Activated naive CD8-positive, alpha-beta T cell treated with anti-CD3 and anti-CD28 coated beads, Interleukin-2, amount 10 ng/mL, durations not matched to agents 7 days and 5 days (primary cell): ENCODE measurements at regions of chr7 and their contacts with region 1.

Region 1: GRCh38 chr7:150514748-150515222 is at the start of gene GIMAP7:
- DNase-seq: peak; percentile 69
- ATAC-seq: peak; percentile 73
- H3K4me3 Mint-ChIP-seq: peak within 1 kb of the TSS; percentile 100
- H3K27ac Mint-ChIP-seq: peak within 1 kb of the TSS; percentile 100
- H3K4me1 Mint-ChIP-seq: peaks cover 41% of the 10 kb centered on the region
- H3K27me3 Mint-ChIP-seq: no peaks in the 10 kb centered on the region
- total RNA-seq, gene GIMAP7: 203 to 212 TPM

Region 2: GRCh38 chr7:150502519-150502918 is 12.3 kb before region 1 on chr7:
- POLR2A ChIA-PET with region 1: interaction called, 57 read pairs
- DNase-seq: no peak
- ATAC-seq: peak; percentile 95
- H3K4me3 Mint-ChIP-seq: peak overlapping the region; percentile 82
- H3K27ac Mint-ChIP-seq: peak overlapping the region; percentile 97
- H3K4me1 Mint-ChIP-seq: peaks cover 62% of the 10 kb centered on the region
- H3K27me3 Mint-ChIP-seq: no peaks in the 10 kb centered on the region

Region 3: DNA sequence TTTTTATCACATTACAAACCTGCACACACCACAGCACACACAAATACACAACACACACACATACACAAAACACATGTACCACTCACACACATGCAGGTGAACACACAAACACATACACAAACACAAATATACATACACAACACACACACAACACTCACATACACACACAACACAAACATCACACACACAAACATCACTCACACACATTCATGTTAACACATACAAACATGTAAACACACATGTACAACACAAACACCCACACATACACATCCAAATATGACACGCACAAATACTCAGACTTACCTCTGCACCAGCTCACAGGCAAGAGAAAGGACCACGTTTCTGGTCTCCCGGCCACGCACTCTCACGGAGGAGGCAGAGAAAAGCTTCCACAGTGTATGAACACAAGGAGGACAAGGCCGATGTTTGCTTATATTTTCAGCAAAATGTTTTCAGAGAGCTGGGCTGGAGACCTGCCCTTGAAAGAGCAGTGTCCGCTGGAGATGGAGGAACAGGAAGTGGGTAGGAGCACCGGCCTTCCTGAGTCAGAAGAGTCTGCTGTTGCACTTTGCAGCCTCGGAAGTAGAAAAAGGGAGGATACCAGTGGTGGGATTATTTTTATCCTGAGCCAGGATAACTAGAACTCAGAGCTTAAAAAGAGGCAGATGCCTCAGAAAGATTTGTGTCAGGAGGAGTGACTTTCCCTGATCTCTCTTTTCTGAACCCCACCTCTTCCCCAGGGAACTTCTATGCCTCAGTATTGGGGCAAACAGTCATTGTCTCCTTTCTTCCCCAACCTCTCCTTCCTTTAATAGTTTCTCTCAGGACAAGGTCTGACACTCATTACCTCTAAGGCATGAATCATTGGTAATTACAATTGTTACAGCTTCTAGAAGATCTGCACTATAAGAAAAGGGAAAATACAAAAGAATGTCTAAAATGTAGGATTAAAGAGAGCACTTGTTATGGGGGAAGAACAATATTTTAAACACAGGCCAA is 117.4 kb after region 1 on chr7 and contains the start of gene GIMAP6:
- POLR2A ChIA-PET with region 1: interaction called, 12 read pairs
- DNase-seq: no peak
- ATAC-seq: peak; percentile 63
- H3K4me3 Mint-ChIP-seq: peak within 1 kb of the TSS; percentile 93
- H3K27ac Mint-ChIP-seq: peak within 1 kb of the TSS; percentile 94
- H3K4me1 Mint-ChIP-seq: peaks cover 46% of the 10 kb centered on the region
- H3K27me3 Mint-ChIP-seq: no peaks in the 10 kb centered on the region
- total RNA-seq, gene GIMAP6: 124 to 130 TPM

Region 4: DNA sequence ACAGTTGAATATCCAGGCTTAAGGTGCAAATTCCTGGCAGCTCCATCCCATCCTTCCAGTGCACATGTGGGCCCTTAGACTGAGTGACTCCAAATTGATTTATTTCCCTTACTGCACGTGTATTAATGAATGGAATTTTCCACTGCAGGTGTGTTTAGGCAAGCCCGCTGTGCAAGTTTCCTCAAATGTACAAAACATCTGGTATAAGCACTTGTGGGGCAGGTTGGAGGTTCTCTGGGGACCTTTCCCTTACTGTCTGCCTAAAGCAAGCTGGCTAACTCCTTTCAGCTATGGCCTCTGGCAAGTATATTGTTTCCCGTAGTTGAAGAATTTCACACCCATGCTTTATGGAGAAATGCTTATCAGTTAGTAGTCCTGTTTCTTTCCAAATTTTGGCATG is 142.7 kb after region 1 on chr7:
- POLR2A ChIA-PET with region 1: no interaction called
- DNase-seq: no peak
- ATAC-seq: no peak
- H3K4me3 Mint-ChIP-seq: no peak overlapping the region
- H3K27ac Mint-ChIP-seq: no peak overlapping the region
- H3K4me1 Mint-ChIP-seq: peaks cover 18% of the 10 kb centered on the region
- H3K27me3 Mint-ChIP-seq: no peaks in the 10 kb centered on the region

Region 5: DNA sequence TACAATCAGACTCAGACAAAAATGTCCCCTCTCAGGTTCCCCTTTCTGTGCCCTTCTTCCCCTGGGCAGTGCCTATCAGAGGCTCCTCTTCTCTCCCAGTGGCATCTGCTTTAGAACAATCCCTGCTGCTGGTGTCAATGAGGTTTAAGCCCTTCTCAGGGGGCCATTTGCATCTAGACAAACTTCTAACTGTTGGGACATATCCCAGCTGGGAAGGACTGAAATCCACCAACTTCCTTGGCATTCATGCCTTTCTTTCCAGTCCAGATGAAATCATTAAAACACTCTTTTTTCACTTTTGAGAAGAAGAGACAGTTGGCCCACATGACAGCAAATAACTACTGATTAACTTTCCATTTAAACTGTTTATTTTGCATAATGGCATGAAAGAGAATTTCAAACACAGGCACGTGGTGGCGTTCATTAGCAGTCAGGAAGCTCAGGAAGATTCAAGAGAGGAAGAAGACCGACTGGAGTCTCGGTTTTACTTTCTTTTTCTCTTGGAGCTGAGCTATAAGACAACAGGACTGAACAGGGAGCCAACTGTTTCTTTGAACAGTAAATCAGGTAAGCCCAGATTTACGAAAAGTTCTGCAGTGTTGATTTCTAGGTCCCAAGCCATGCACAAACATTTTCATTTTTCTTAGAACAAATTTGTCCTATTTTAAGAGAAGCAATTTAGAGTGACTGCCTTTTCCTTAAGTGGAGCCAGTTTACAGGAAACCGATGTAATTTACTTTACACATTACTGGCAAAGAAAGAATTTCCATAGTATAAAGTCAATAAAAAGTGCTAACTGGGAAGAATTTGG is 170.6 kb after region 1 on chr7 and contains the start of gene GIMAP2:
- POLR2A ChIA-PET with region 1: interaction called, 16 read pairs
- DNase-seq: no peak
- ATAC-seq: peak; percentile 85
- H3K4me3 Mint-ChIP-seq: peak within 1 kb of the TSS; percentile 98
- H3K27ac Mint-ChIP-seq: peak within 1 kb of the TSS; percentile 98
- H3K4me1 Mint-ChIP-seq: peaks cover 64% of the 10 kb centered on the region
- H3K27me3 Mint-ChIP-seq: no peaks in the 10 kb centered on the region
- total RNA-seq, gene GIMAP2: 139 to 140 TPM

Region 6: DNA sequence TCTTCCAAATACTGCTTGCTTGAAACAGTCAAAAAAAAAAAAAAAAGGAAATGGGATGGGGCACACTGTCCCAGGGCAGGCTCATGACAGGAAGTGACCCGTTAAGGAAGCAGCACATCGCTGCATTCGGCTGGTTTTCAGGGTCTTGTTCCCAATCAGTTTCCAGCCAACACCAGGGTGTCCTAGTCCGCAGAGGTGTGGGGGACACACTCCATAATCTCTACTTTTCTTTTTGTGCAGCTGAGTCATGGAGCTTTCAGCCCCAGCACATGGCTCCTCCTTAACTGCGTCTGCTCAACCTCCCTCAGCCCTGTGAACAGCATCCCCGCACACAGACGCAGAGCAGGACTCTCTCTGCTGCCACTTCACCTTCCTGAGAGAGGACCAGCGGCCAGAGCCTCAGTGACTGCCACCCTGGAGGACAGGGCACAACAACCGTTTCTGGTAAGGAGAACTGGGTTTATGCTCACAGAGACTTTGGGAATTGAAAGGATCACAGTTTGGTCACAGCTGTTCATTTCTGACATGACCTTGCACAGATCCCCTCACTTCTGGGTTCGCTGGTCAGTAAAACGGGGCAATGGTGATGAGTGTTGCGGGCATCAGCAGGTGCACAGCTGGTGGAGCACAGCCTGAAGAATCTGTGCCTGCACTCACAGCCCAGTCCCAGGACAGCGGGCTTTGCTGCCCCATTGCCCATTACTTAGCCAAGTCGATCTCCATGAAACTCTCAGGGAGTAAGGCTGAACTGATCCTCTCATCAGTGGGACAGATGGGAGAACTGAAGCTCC is 222.7 kb after region 1 on chr7 and contains the start of gene GIMAP5:
- POLR2A ChIA-PET with region 1: interaction called, 15 read pairs
- DNase-seq: peak; percentile 67
- ATAC-seq: peak; percentile 77
- H3K4me3 Mint-ChIP-seq: peak within 1 kb of the TSS; percentile 98
- H3K27ac Mint-ChIP-seq: peak within 1 kb of the TSS; percentile 98
- H3K4me1 Mint-ChIP-seq: peaks cover 72% of the 10 kb centered on the region
- H3K27me3 Mint-ChIP-seq: no peaks in the 10 kb centered on the region
- total RNA-seq, gene GIMAP5: 112 to 123 TPM